GM12878 (cell line): ENCODE measurements at regions of chr4 and their contacts with region 1.

Region 1: DNA sequence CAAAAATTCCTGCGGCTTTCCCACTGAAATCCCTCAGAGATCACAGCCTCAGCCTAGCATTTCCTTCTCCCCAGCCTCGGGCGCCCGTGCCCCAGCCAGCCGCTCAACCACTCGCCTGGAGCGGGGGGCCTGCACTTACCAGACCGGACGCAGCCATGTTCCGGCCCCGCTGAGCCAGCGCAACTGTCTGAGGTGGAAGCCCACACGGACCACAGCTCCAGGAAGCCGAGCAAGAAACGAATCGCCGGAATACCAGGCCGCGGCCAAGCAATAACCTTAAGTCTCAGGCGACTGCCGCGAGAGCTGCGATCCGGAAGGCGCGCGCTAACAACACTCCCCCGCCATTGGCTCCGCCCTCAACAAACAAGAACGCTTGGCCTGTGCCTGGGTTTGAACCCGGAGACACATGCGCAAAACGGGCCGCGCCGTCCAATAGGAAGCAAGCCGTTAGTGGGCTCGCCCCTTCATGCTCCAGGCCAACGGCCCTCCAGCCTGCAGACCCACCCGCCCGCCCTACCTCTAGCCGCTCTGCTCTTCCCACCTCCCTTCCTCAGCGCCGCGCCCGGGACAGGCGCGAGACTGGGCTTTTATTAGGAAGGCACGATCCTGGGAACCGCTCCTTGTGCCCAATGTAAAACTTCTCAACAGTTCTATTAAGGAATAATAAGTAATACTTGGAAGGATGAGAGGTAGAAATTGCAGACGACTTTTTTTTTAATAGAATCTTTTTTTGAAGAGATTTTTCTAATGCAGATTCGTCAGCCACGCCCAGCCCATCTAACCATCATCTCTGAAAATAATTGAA is at the start of gene CENPC:
- DNase-seq: peak; percentile 91
- ATAC-seq: peak; percentile 97
- H3K4me3 ChIP-seq: peak within 1 kb of the TSS; percentile 95
- H3K27ac ChIP-seq: peak within 1 kb of the TSS; percentile 68
- H3K4me1 ChIP-seq: no peaks in the 10 kb centered on the region; the same call in 1 of the 2 replicates
- H3K27me3 ChIP-seq: no peaks in the 10 kb centered on the region
- CTCF ChIP-seq: no peak
- EP300 ChIP-seq: 0 out of 4 replicates have a peak, but pooled peaks of 1 of the 2 experiments have one; percentile 5
- POLR2A ChIP-seq: peak; percentile 99
- RAD21 ChIP-seq: no peak
- polyA plus RNA-seq, gene CENPC: 13.1 to 15.2 TPM

Region 2: GRCh38 chr4:67558493-67558892 is 13.1 kb after region 1 on chr4 and contains the start of gene STAP1:
- CTCF ChIA-PET with region 1: interaction called, 10 read pairs
- POLR2A ChIA-PET with region 1: interaction called, 5 read pairs
- RAD21 ChIA-PET with region 1: interaction called, 8 read pairs
- SMC1A ChIA-PET with region 1: interaction called, 5 read pairs
- in situ Hi-C with region 1: no loop called
- intact Hi-C with region 1: no loop called
- DNase-seq: no peak
- ATAC-seq: peak; percentile 76
- H3K4me3 ChIP-seq: peak within 1 kb of the TSS; percentile 55
- H3K27ac ChIP-seq: peak within 1 kb of the TSS; percentile 38; the same call in 1 of the 2 replicates
- H3K4me1 ChIP-seq: no peaks in the 10 kb centered on the region; the same call in 1 of the 2 replicates
- H3K27me3 ChIP-seq: no peaks in the 10 kb centered on the region
- CTCF ChIP-seq: peak in 1 of 3 experiments; percentile 34; a peak in 2 of 6 replicates
- EP300 ChIP-seq: peak; percentile 24 to 71; a peak in 2 of 4 replicates
- POLR2A ChIP-seq: no peak
- RAD21 ChIP-seq: peak; percentile 38; the same call in 1 of the 2 replicates
- polyA plus RNA-seq, gene STAP1: 16.3 to 19.4 TPM

Region 3: GRCh38 chr4:67581208-67581857 is 35.9 kb after region 1 on chr4:
- CTCF ChIA-PET with region 1: interaction called, 11 read pairs
- POLR2A ChIA-PET with region 1: interaction called, 5 read pairs
- RAD21 ChIA-PET with region 1: interaction called, 11 read pairs
- SMC1A ChIA-PET with region 1: interaction called, 22 read pairs
- in situ Hi-C with region 1: no loop called
- intact Hi-C with region 1: loop called (anchors 2 kb)
- DNase-seq: no peak
- ATAC-seq: peak; percentile 65
- H3K4me3 ChIP-seq: peak overlapping the region; percentile 40
- H3K27ac ChIP-seq: peak overlapping the region; percentile 8
- H3K4me1 ChIP-seq: peaks cover 18% of the 10 kb centered on the region
- H3K27me3 ChIP-seq: no peaks in the 10 kb centered on the region
- CTCF ChIP-seq: no peak
- EP300 ChIP-seq: no peak
- POLR2A ChIP-seq: no peak
- RAD21 ChIP-seq: no peak

Region 4: DNA sequence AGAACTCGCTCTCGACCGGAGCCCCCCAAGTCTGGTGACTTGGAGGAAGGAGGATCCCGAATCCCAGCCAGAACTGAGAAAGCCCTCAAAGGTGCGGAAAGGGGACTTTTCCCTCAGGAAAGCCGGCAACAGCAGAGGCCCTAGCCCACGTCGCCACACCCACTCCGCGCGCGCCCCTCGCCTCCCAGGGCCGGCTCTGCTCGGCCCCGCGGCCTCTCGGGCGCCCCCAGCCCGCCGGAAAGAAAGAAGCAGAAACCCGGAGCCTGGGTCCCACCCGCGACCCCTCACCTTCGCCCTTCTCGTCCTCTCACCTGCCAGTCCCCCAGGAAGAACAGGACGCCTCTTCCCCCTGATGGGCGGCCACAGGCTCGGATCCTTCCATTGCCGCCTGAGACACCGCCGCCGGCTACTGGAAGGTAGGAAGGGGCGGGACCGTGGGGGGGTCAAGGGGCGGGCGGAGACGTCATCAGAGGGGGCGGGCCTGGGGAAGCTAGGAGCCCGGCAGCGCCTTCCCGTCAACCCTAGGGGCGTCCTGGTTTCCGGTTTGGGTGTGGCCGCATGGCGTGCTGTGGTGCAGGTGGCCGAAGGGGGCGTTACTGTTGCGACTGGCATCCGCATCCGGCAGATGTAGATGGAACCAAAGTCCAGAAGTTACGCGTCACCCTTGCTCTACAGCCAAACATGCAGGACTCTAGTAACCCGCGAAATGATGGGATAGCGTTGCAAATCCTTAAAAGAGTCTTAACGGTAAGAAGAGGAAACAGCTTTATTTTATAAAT is 155.5 kb after region 1 on chr4 and contains the start of gene UBA6:
- CTCF ChIA-PET with region 1: interaction called, 18 read pairs
- POLR2A ChIA-PET with region 1: interaction called, 18 read pairs
- RAD21 ChIA-PET with region 1: interaction called, 9 read pairs
- SMC1A ChIA-PET with region 1: interaction called, 33 read pairs
- in situ Hi-C with region 1: no loop called
- intact Hi-C with region 1: loop called (anchors 1 kb)
- DNase-seq: peak; percentile 89
- ATAC-seq: peak; percentile 95
- H3K4me3 ChIP-seq: peak within 1 kb of the TSS; percentile 77
- H3K27ac ChIP-seq: peak within 1 kb of the TSS; percentile 95
- H3K4me1 ChIP-seq: no peaks in the 10 kb centered on the region
- H3K27me3 ChIP-seq: no peaks in the 10 kb centered on the region
- CTCF ChIP-seq: peak; percentile 27 to 55 (median 31); a peak in 5 of 6 replicates
- EP300 ChIP-seq: peak; percentile 50 to 73; a peak in 3 of 4 replicates
- POLR2A ChIP-seq: peak; percentile 93
- RAD21 ChIP-seq: peak; percentile 23; the same call in 1 of the 2 replicates
- polyA plus RNA-seq, gene UBA6: 7.9 to 15.3 TPM

Region 5: DNA sequence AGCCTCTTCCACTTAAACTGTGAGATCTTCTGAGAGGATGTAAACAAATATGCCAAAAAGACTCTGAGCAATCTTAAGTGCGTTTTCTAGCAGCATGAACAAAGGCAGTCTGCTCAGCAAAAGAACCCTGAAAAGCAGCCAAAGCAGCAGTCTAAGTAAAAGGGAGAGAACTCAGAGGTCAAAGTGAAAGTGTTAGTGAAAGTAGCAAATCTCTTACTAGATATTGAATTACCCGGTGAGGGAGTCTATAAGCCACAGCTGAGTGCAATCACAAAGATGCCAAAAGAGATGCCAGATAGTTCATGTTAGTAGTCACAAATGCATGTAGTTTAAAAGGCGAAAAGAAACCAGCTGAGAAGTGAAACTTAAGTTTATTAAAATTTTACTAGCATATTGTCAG is 216.7 kb after region 1 on chr4:
- CTCF ChIA-PET with region 1: interaction called, 3 read pairs
- POLR2A ChIA-PET with region 1: no interaction called
- RAD21 ChIA-PET with region 1: interaction called, 3 read pairs
- SMC1A ChIA-PET with region 1: no interaction called
- in situ Hi-C with region 1: no loop called
- intact Hi-C with region 1: loop called (anchors 5 kb)
- DNase-seq: peak; percentile 45
- ATAC-seq: peak; percentile 100
- H3K4me3 ChIP-seq: no peak overlapping the region
- H3K27ac ChIP-seq: 0 out of 2 replicates have a peak overlapping the region, but pooled peaks have one; percentile 13
- H3K4me1 ChIP-seq: no peaks in the 10 kb centered on the region
- H3K27me3 ChIP-seq: no peaks in the 10 kb centered on the region
- CTCF ChIP-seq: no peak
- EP300 ChIP-seq: no peak
- POLR2A ChIP-seq: no peak
- RAD21 ChIP-seq: no peak

Region 6: DNA sequence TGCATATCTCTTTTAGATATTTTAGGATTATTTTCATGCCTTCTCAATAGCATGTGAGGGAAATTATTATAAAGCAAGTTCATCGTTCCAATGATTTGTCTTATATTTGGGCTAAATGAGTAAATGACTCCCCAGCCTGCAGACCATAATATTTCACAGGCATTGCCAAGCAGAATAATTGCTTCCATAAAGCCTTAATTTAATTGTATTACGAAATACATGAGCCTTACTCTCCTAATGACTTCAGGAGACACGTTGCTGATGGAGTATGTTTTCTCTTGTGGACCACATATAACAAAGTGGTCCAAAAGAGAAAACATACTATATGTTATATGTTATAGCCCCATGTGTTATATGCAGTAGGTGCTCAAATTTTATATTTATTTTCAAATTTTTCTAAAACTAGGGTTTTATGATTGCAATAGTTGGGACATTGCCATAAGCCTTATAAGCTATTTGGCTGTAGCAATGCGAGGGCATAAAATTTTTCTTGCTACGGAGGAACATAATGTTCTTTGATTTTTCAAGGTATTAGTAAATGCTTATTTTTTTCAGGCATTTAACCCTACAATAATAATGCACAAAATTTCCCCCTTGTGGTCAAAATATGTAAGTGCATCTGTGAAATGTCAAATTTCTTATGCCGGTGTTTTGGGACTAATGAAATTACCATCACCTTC is 364.6 kb after region 1 on chr4:
- CTCF ChIA-PET with region 1: interaction called, 16 read pairs
- POLR2A ChIA-PET with region 1: no interaction called
- RAD21 ChIA-PET with region 1: interaction called, 7 read pairs
- SMC1A ChIA-PET with region 1: interaction called, 9 read pairs
- in situ Hi-C with region 1: no loop called
- intact Hi-C with region 1: loop called (anchors 1 kb)
- DNase-seq: no peak
- ATAC-seq: peak; percentile 40; the same call in 1 of the 3 replicates
- H3K4me3 ChIP-seq: no peak overlapping the region
- H3K27ac ChIP-seq: no peak overlapping the region
- H3K4me1 ChIP-seq: no peaks in the 10 kb centered on the region
- H3K27me3 ChIP-seq: no peaks in the 10 kb centered on the region
- CTCF ChIP-seq: peak; percentile 44 to 54 (median 51); a peak in 5 of 6 replicates
- EP300 ChIP-seq: no peak
- POLR2A ChIP-seq: no peak
- RAD21 ChIP-seq: peak; percentile 57

Region 7: GRCh38 chr4:68630373-68630772 is 1085.0 kb after region 1 on chr4:
- CTCF ChIA-PET with region 1: no interaction called
- POLR2A ChIA-PET with region 1: no interaction called
- RAD21 ChIA-PET with region 1: no interaction called
- SMC1A ChIA-PET with region 1: no interaction called
- in situ Hi-C with region 1: loop called (anchors 25 kb)
- intact Hi-C with region 1: no loop called
- DNase-seq: no peak
- ATAC-seq: no peak
- H3K4me3 ChIP-seq: no peak overlapping the region
- H3K27ac ChIP-seq: no peak overlapping the region
- H3K4me1 ChIP-seq: no peaks in the 10 kb centered on the region
- H3K27me3 ChIP-seq: no peaks in the 10 kb centered on the region
- CTCF ChIP-seq: no peak
- EP300 ChIP-seq: no peak
- POLR2A ChIP-seq: no peak
- RAD21 ChIP-seq: no peak